Activated CD4-positive, alpha-beta memory T cell treated with anti-CD3 and anti-CD28 coated beads for 36 hours (primary cell): ENCODE measurements at regions of chr3 and their contacts with region 1.

Region 1: GRCh38 chr3:127598841-127599570 is 795 bp downstream of the MCM2 start:
- DNase-seq: no peak
- H3K4me3 Mint-ChIP-seq: peak overlapping the region; percentile 92
- H3K27ac Mint-ChIP-seq: peak overlapping the region; percentile 90
- H3K4me1 Mint-ChIP-seq: peaks cover 44% of the 10 kb centered on the region
- H3K27me3 Mint-ChIP-seq: no peaks in the 10 kb centered on the region

Region 2: DNA sequence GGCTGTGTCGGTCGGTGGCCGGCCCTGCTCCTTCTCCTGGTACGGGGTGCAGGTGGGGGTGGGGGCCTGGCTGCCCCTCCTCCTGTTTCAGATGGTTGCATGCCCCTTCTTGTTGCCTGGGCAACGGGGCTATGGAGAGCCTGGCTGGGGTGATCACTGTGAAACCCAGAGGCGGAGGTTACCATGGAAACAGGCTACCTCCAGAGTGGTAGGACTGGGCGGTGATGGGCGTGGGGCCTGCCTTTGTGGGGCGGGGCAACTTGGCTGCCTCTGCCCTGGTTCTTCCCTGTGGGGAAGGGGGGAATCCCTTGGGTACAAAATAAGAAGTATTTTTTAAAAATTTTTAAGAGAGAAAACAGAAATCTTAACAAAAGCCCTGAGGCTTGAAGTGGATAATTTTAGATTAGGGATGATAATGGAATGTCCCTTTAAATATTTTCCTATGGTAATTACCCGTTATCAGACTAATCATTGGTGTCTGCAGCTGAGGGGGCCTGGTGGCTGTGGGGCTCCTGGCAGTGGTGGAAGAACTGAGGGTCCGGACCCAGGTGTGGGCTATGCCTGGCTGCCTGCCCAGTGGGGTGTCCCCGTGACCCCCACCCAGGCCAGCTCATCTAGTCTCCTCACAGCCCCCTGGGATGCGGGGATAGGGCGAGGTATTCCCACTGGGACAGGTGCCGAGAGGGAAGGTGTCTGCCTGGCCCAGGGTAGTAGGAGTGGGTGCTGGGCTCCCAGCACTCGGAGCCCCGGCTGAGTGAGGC is 583.5 kb before region 1 on chr3:
- CTCF ChIA-PET with region 1: no interaction called
- POLR2A ChIA-PET with region 1: no interaction called
- intact Hi-C with region 1: no loop called
- DNase-seq: no peak
- H3K4me3 Mint-ChIP-seq: no peak overlapping the region
- H3K27ac Mint-ChIP-seq: no peak overlapping the region
- H3K4me1 Mint-ChIP-seq: no peaks in the 10 kb centered on the region
- H3K27me3 Mint-ChIP-seq: no peaks in the 10 kb centered on the region

Region 3: GRCh38 chr3:127629467-127630403 is 30.7 kb after region 1 on chr3:
- CTCF ChIA-PET with region 1: no interaction called
- POLR2A ChIA-PET with region 1: interaction called, 3 read pairs
- intact Hi-C with region 1: loop called (anchors 5 kb)
- DNase-seq: peak; percentile 45
- H3K4me3 Mint-ChIP-seq: peak overlapping the region; percentile 51
- H3K27ac Mint-ChIP-seq: no peak overlapping the region
- H3K4me1 Mint-ChIP-seq: peaks cover 25% of the 10 kb centered on the region
- H3K27me3 Mint-ChIP-seq: peaks cover 22% of the 10 kb centered on the region

Region 4: DNA sequence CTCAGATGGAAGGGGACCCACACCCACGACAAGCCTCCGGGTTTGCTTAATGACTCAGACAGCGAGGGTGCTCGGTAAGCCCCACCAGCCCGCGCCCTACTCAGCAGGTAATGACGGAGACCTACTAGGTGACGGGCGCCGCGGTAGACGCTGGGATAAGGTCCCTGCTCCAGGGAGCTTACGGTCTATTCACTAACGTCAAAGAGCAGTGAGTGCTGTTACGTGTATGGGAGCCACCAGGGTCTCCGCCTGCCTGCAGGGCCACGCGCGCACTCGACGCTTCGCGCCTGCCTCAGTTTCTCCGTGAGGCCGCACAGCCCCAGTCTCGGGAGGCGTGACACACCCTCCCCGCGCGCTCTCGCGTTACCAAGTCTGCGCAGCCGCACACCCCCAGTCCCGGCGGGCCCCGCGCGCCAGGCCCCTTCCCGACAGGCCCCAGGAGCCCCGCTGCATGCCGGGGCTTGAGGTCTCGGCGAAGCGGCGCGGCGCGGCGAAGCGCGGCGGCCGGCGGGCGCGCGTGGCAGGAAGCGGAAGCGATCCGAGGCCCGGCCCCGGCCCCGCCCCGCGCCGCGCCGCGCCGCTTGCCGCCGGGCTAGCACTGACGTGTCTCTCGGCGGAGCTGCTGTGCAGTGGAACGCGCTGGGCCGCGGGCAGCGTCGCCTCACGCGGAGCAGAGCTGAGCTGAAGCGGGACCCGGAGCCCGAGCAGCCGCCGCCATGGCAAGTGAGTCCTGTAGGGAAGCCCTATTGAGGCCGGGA is 453.0 kb after region 1 on chr3 and contains the start of gene SEC61A1:
- CTCF ChIA-PET with region 1: no interaction called
- POLR2A ChIA-PET with region 1: no interaction called
- intact Hi-C with region 1: loop called (anchors 1 kb)
- DNase-seq: peak; percentile 97
- H3K4me3 Mint-ChIP-seq: peak within 1 kb of the TSS; percentile 98
- H3K27ac Mint-ChIP-seq: peak within 1 kb of the TSS; percentile 90
- H3K4me1 Mint-ChIP-seq: peaks cover 36% of the 10 kb centered on the region
- H3K27me3 Mint-ChIP-seq: no peaks in the 10 kb centered on the region
- total RNA-seq, gene SEC61A1: 147 to 149 TPM